ENCODE measurements at regions of chr10 and their contacts with region 1.

Region 1: DNA sequence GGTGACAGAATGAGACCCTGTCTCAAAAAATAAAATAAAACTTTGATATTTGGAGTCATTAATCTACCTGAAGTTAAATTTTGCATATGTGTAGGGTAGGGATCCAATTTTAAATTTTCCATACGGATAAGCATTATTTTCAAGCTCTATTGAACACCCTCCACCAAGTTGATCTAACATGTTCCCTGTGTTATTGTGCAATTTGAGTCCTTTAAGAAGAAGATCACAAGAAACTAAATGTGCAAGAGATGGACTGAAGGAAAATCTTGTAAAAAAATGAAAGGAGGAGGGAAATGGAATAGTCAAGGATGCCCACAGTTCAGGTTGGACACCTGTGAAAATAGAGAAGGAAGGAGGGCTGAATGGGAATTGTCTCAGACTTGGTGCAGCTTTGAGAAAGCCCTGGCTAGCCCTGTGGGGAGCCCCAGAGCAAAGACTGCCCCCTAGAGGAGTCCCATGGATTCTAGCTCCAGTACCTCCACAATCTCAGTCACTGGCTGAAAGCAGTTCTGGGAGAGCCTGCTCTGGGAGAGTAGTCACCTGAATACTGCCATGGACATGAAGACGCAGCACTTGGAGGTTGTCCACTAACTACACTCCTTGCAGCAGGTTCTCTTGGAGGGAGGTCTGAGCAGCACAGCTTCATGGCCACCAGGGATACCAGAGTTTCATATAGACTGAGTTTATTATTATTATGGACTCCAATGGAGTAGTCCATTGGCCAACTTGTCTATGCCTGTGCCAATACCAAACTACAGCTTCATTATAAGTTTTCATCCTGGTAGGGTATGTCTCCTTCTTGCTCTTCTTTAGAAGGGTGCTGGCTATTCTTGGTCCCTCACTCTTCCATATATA is 5.7 kb upstream of the TIAL1 start:
- DNase-seq: peak; percentile 38
- H3K4me3 ChIP-seq: no peak overlapping the region
- H3K27ac ChIP-seq: no peak overlapping the region
- H3K4me1 ChIP-seq: peaks cover 5% of the 10 kb centered on the region
- H3K27me3 ChIP-seq: no peaks in the 10 kb centered on the region
- CTCF ChIP-seq: peak; percentile 63 to 84
- POLR2A ChIP-seq: no peak

Region 2: DNA sequence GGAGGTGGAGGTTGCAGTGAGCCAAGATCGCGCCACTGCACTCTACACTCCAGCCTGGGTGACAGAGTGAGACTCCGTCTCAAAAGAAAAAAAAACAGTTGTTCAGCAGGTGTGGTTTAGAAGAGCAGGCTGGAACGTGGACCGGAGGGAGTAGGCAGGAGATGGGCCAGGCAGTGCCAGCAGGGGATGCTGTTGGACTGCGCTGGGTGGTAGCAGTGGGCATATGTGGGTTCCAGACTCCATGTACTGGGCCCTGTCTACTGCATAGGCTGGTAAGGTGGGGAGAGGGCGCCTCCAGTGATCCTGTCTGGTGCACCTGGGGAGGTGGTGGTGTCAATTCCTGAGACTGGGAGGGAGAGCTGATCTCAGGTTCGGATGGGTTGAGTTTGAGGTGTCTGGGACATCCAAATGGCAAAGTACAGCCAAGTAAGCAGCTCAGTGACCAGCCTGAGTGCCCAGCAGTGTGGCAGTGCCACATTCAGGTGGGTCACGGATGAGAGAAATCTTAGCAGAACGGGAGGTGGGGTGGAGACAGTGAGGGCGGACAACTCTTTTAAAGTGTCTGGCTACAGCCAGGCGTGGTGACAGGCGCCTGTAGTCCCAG is 462.9 kb before region 1 on chr10:
- CTCF ChIA-PET with region 1: interaction called, 4 read pairs
- POLR2A ChIA-PET with region 1: no interaction called
- dilution Hi-C with region 1: no loop called
- intact Hi-C with region 1: loop called (anchors 1 kb)
- DNase-seq: peak; percentile 37
- H3K4me3 ChIP-seq: no peak overlapping the region
- H3K27ac ChIP-seq: no peak overlapping the region
- H3K4me1 ChIP-seq: peaks cover 3% of the 10 kb centered on the region
- H3K27me3 ChIP-seq: no peaks in the 10 kb centered on the region
- CTCF ChIP-seq: peak; percentile 50 to 75
- POLR2A ChIP-seq: no peak

Region 3: DNA sequence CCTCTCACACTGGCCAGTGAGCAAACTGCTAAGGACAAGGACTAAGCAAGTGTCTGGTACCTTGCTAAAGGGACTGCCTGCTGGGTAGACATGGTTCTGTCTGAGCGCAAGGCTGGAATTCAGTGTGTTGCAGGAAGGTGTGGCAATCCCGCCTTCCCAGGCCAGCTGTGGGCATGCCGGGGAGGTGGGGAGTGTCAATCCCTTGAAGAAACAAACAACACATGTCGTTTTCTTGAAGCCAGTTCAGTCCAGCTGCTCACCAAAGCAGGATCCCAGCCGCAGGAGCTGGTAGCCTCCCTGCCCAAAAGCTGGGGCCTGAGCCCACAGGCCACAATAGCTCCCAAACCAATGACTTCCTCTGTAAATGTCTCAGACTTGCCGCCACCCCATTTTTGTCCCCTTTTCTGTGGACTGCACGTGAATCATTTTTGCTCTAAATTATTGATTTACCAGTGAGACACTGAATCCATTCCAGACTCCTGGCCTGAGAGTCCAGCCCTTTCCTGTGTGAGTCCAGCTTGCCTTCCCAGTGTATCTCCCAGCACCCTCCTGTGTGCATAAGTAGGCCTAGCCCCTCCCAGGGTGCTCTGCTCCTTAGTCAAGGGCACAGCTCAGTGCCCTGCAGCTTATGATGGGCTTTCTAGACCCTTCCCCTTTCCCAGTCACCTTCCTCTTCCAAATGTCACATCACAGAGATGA is 226.7 kb before region 1 on chr10:
- CTCF ChIA-PET with region 1: no interaction called
- POLR2A ChIA-PET with region 1: no interaction called
- dilution Hi-C with region 1: no loop called
- intact Hi-C with region 1: no loop called
- DNase-seq: peak; percentile 7
- H3K4me3 ChIP-seq: no peak overlapping the region
- H3K27ac ChIP-seq: no peak overlapping the region
- H3K4me1 ChIP-seq: peaks cover 9% of the 10 kb centered on the region
- H3K27me3 ChIP-seq: no peaks in the 10 kb centered on the region
- CTCF ChIP-seq: no peak
- POLR2A ChIP-seq: no peak

Region 4: GRCh38 chr10:119395280-119395989 is 207.0 kb before region 1 on chr10:
- CTCF ChIA-PET with region 1: no interaction called
- POLR2A ChIA-PET with region 1: no interaction called
- dilution Hi-C with region 1: no loop called
- intact Hi-C with region 1: no loop called
- DNase-seq: peak; percentile 35
- H3K4me3 ChIP-seq: no peak overlapping the region
- H3K27ac ChIP-seq: no peak overlapping the region
- H3K4me1 ChIP-seq: peaks cover 8% of the 10 kb centered on the region
- H3K27me3 ChIP-seq: no peaks in the 10 kb centered on the region
- CTCF ChIP-seq: no peak
- POLR2A ChIP-seq: no peak

Region 5: DNA sequence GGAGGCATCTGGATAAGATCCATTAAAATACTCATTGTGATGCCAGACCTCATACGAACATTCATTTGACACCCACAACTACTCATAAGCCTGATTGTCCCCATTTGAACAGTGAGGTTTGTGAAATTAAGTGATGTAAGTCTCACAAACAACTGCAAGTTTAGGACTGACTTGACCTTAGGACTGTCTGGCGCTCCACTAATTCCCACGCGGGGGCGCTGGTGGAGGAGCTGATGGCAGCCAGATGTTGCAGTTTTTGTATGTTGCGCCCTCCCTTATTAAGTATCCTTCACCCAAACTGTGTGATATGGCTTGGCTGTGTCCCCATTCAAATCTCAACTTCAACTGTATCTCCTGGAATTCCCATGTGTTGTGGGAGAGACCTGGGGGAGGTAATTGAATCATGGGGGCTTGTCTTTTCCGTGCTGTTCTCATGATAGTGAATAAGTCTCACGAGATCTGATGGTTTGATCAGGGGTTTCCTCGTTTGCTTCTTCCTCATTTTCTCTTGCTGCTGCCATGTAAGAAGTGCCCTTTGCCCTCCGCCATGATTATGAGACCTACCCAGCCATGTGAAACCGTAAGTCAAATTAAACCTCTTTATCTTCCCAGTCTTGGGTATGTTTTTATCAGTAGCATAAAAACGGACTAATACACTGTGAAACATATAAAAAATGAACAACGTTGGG is 14.6 kb after region 1 on chr10:
- CTCF ChIA-PET with region 1: interaction called, 11 read pairs
- POLR2A ChIA-PET with region 1: no interaction called
- dilution Hi-C with region 1: no loop called
- intact Hi-C with region 1: no loop called
- DNase-seq: no peak
- H3K4me3 ChIP-seq: no peak overlapping the region
- H3K27ac ChIP-seq: no peak overlapping the region
- H3K4me1 ChIP-seq: peaks cover 11% of the 10 kb centered on the region
- H3K27me3 ChIP-seq: no peaks in the 10 kb centered on the region
- CTCF ChIP-seq: peak in 1 of 2 donors; percentile 14
- POLR2A ChIP-seq: no peak

Region 6: DNA sequence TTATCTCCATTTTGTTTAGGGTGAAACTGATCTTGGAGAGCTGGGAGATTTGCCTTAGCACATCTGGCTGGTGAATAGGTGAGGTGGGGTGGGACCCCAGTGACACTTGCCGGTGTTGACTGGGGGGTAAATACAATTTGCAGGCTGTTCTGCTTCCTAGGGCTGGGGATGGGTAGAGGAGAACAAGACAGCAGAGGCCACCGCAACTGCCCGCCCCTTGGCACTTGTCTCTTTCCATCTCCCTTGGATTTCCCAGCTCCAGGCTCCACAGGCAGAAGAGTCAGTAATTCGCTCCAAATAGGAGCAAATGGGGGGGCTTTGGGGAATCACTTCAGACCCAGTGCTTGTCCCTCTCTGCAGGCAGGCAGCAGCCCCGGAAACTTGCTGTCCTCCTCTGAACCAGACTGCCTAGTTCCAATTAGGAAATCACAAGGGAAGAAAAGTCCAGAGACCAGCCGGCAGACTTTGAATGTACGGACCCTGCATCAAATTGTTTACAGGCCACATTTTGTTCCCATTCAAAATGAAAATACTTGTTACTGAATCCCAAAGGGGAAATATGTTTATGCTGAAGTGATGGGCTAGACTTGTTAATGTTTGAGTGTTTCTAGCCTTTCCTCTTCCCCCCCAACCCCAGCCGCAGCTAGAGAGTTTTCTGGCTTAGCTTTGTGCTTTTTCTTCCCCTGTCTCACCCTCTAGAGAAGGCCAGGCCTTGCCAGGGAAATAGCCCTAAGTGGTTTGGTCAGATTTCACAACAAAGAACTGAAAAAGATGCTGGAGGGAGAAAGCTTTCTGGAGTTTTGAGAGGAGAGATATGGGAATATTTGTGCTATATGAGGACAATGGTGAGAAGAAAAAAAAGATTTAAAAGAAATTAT is 113.4 kb after region 1 on chr10:
- CTCF ChIA-PET with region 1: no interaction called
- POLR2A ChIA-PET with region 1: no interaction called
- dilution Hi-C with region 1: no loop called
- intact Hi-C with region 1: no loop called
- DNase-seq: no peak
- H3K4me3 ChIP-seq: no peak overlapping the region
- H3K27ac ChIP-seq: no peak overlapping the region
- H3K4me1 ChIP-seq: no peaks in the 10 kb centered on the region
- H3K27me3 ChIP-seq: no peaks in the 10 kb centered on the region
- CTCF ChIP-seq: no peak
- POLR2A ChIP-seq: no peak